ENCODE measurements at regions of chr1 and their contacts with region 1.

Region 1: GRCh38 chr1:112144733-112145426 is 155.4 kb upstream of the KCND3 start:
- DNase-seq: no peak
- H3K4me3 ChIP-seq: no peak overlapping the region
- H3K27ac ChIP-seq: no peak overlapping the region
- H3K4me1 ChIP-seq: no peaks in the 10 kb centered on the region
- CTCF ChIP-seq: no peak

Region 2: DNA sequence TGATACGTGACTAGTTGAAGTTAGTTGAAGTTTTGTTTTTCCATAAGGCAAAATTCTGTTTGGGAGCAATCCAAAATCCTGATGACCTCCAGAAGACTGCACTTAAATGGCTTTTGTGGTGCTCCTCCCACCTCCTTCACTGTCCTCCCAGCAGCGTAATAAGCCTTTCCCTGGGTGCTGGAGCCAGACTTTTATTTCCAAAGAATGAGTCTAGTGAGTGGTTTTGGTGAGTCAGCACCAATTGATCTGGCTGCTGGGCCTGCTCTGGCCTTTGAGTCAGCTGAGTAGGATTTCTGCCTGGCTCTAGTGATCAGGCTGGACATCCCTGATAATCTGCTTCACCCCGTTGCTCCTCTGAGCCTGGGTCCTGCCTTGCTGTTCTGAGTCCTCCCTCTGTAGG is 133.7 kb before region 1 on chr1:
- CTCF ChIA-PET with region 1: no interaction called
- POLR2A ChIA-PET with region 1: no interaction called
- intact Hi-C with region 1: no loop called
- DNase-seq: no peak
- H3K4me3 ChIP-seq: no peak overlapping the region
- H3K27ac ChIP-seq: no peak overlapping the region
- H3K4me1 ChIP-seq: no peaks in the 10 kb centered on the region
- CTCF ChIP-seq: no peak

Region 3: DNA sequence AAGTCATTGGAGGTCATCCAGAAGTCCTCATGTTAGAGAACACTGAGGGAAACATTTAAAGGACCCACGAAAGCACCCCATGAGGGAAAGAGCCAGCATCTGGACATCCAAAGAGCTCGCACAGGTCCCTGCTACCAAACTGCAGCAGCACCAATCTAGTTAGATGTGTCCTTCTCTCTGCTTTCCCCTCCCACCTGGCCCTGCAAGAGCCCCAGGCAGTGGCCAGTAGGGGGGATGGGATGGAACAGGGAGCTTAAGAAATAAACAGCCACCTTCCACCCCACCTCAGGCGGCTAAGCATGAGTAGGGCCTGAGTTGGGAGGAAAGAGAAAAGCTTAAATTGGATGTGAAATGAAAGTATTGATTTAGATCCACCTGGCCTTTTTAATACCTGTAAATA is 20.5 kb after region 1 on chr1:
- CTCF ChIA-PET with region 1: no interaction called
- POLR2A ChIA-PET with region 1: no interaction called
- intact Hi-C with region 1: loop called (anchors 1 kb)
- DNase-seq: no peak
- H3K4me3 ChIP-seq: no peak overlapping the region
- H3K27ac ChIP-seq: no peak overlapping the region
- H3K4me1 ChIP-seq: no peaks in the 10 kb centered on the region
- CTCF ChIP-seq: no peak

Region 4: DNA sequence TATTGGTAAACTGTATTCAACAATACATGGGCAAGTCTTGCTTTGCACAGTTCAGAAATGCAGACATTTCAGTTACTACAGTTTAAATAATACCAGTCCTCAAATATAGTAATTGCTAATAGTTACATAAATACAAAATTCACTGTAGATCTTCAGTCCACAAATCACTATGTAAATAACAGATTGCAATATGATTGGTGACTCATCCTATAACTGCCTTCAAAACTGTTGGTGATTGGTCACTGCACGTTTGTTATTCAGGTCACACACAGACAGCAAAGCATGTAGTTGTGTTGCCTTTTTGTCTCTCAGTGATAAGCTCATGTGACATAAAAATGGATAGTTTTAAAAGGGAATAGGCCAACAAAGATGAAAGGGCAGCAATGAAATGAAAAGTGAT is 64.6 kb after region 1 on chr1:
- CTCF ChIA-PET with region 1: no interaction called
- POLR2A ChIA-PET with region 1: no interaction called
- intact Hi-C with region 1: no loop called
- DNase-seq: no peak
- H3K4me3 ChIP-seq: no peak overlapping the region
- H3K27ac ChIP-seq: no peak overlapping the region
- H3K4me1 ChIP-seq: no peaks in the 10 kb centered on the region
- CTCF ChIP-seq: no peak

Region 5: DNA sequence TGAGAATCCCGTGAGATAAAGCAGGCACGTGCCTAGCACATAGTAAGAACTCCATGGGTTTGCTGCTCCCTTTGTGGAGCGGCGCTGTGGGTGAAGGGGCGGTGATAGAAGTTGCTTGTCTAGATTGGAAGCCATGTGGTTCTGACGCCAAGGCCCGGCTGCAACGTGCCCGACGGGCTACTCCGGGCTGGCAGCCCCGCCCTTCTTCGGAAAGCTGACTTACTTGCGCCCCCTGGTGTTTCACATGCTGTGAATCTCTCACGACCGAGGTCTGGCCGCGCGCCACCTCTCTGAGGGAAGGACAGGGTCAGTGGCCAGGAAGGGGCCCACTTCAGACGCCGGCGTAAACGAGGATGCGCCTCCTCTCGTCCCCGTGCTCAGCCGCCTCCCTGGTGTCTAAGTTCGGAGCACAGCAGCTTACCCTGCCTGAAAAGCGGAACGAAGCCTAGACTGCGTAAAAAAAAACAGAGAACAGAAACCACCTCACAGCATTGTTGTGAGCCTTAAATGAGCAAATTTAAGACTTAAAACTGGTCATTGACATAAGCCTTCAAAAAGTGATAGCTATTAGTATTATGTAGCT is 321.3 kb after region 1 on chr1:
- CTCF ChIA-PET with region 1: no interaction called
- POLR2A ChIA-PET with region 1: no interaction called
- intact Hi-C with region 1: no loop called
- DNase-seq: peak; percentile 92
- H3K4me3 ChIP-seq: peak overlapping the region; percentile 41
- H3K27ac ChIP-seq: peak overlapping the region; percentile 64
- H3K4me1 ChIP-seq: peaks cover 43% of the 10 kb centered on the region
- CTCF ChIP-seq: peak; percentile 89

Region 6: DNA sequence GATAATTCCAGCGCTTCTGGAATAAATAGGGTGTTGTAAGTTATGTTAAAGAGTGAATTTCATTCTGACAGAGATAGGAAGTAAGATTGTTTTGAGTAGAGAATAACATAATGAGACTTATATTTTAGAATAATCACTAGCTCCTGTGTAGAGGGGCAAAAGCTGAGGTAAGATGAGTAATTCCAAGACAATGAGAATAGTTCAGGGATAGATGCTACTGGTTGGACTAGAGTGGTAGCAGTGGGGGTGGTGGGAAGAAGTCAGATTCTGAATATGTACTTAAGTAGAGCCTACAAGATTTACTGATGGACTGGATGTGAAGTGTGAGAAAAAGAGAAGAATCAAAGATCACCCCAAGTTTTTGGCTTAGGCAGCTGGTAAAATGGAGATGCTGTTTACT is 506.3 kb after region 1 on chr1:
- CTCF ChIA-PET with region 1: no interaction called
- POLR2A ChIA-PET with region 1: no interaction called
- intact Hi-C with region 1: no loop called
- DNase-seq: no peak
- H3K4me3 ChIP-seq: no peak overlapping the region
- H3K27ac ChIP-seq: no peak overlapping the region
- H3K4me1 ChIP-seq: no peaks in the 10 kb centered on the region
- CTCF ChIP-seq: no peak